Activated naive CD4-positive, alpha-beta T cell treated with anti-CD3 and anti-CD28 coated beads for 36 hours (primary cell): ENCODE measurements at regions of chr12 and their contacts with region 1.

Region 1: DNA sequence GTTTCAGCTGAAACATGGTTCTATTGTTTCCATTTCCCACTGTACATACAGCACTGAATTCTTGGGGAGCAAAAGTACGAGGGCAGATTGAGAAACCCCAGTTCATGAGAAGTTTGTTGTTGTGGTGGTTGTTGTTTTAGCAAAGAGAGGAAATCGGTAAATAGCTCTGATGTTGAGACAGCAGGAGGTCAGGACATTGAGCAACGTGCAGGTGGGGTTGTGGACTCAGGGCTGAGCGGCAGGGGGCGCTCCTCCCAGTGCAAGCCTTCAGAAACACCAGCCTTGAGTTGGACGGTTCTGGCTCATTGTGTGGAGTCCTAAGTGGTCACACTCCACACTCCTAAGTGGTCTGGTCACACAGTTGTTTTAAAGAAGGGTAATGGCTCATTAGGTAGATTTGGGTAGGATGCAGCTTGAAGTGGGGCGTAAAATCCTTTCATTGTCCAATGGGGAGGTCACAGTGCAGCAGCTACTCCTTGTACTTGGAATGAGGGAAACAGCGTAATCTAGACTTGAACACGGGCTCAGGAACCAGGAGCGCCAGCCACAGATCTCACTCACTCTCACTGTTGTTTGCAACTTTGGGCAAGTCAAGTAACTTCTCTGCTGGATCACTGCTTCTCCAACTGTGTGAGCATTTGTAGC is 14.5 kb upstream of the PWP1 start:
- DNase-seq: peak; percentile 60
- H3K4me3 Mint-ChIP-seq: no peak overlapping the region
- H3K27ac Mint-ChIP-seq: no peak overlapping the region
- H3K4me1 Mint-ChIP-seq: peaks cover 4% of the 10 kb centered on the region
- H3K27me3 Mint-ChIP-seq: peaks cover 6% of the 10 kb centered on the region

Region 2: DNA sequence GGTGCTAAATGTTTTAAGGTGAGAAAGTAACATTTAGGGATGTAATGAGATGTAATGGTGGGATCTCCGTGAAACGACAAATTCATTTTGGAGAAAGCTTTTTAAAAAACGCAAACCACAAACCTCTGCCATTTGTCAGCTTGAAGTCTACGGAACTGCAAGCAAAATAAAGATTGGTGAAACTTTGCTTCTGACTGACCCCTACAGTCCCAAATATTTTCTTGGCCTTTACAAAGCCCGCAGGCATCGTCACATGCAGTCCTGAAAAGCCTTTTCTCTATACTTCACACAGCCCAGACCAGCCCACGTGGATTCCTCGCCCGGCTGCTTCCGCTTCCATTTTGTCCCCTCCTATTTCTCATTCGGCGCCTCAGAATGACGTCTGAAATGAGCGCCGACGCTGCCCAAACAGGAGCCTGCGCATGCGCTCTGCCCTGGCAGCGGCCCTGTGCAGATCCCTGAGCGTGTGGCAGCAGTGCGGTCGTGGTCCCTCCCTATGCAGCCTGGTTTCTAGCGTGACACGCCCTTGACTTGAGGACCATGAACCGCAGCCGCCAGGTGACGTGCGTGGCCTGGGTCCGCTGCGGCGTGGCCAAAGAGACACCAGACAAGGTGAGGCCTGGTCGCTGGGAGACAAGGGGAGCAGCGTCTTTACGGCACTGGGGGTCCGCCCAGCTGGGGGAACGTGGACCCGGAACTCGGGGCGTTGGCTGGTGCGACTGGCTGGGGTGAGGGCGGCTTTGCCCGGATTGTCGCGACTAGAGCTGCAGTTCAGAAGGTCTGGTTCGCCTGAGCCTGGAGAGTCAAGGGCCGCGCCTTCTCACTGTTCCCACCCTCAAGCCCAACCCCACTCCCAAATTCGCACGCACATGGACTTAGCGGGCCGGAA is 14.5 kb after region 1 on chr12 and contains the start of gene PWP1:
- CTCF ChIA-PET with region 1: interaction called, 39 read pairs
- intact Hi-C with region 1: no loop called
- DNase-seq: peak; percentile 95
- H3K4me3 Mint-ChIP-seq: peak within 1 kb of the TSS; percentile 90
- H3K27ac Mint-ChIP-seq: peak within 1 kb of the TSS; percentile 95
- H3K4me1 Mint-ChIP-seq: peaks cover 20% of the 10 kb centered on the region
- H3K27me3 Mint-ChIP-seq: no peaks in the 10 kb centered on the region
- total RNA-seq, gene PWP1: 35.0 to 37.1 TPM

Region 3: DNA sequence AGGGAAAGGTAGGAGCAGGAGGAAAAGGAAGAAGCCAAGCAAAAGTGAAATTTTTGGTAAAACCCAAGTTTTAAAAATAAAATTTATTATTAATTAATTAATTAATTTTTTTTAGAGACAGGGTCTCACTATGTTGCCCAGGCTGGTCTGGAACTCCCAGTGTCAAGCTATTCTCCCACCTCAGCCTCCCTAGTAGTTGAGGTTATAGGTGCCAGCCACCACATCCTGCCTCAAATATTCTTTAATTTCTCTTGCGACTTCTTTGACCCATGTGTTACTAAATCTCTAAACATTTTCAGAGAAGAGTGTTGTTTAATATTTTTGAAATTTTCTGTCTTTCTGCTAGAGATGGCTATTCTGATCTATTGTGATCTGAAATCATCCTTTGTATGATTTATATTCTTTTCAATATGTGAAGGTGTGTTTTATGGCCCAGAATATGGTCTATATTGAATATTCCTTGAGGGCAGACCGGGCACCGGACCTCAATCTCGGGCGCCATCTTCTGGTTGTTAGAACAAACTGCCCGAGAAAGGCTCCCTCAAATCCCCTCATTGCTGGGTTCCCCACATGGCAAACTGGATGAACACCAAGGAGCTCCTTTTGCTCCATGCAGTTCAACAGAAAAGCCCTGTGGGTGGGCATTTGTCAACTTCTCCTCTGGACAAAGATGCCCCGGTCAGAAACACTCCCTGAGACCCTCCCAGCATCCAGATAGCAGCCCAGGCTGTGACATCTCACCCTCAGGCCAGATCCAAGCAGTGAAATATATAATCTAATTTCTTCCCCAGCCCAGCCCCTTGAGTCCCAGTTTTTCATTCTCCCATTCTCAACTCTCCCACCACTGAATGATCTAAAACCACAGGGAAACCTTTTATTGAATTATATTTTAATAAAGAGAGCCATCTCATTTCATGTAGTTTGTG is 213.9 kb after region 1 on chr12:
- CTCF ChIA-PET with region 1: interaction called, 58 read pairs
- intact Hi-C with region 1: loop called (anchors 1 kb)
- DNase-seq: peak; percentile 64
- H3K4me3 Mint-ChIP-seq: no peak overlapping the region
- H3K27ac Mint-ChIP-seq: no peak overlapping the region
- H3K4me1 Mint-ChIP-seq: no peaks in the 10 kb centered on the region
- H3K27me3 Mint-ChIP-seq: peaks cover 16% of the 10 kb centered on the region

Region 4: DNA sequence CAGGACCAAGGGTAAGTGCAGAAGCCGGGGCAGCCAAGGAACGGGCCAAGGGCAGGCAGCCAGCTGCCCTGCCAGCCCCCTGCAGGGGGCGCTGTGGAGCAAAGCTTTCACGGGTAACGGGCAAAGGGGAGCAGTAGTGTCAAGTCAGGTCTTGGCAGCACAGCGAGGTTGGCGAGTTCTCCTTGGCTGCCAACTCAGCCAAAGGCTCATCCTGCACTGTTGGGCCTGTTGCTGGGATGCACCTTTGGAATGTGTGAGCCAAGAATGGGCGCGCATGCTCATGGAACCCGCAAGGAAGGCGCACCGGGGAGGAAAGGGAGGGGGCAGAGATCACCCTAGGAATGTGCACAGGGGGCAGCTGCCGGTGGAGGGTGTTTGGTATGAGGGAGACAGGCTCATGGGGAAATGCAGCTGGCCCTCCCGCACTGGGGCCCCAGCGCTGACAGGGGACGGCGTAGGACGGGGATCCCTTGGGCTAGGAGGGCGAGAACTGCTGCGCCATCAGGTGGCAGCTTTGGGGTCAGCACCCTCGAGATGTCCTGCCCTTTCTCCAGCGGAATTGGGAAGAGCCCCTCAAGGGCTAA is 241.4 kb after region 1 on chr12:
- CTCF ChIA-PET with region 1: interaction called, 5 read pairs
- intact Hi-C with region 1: loop called (anchors 1 kb)
- DNase-seq: peak; percentile 75
- H3K4me3 Mint-ChIP-seq: peak overlapping the region; percentile 70
- H3K27ac Mint-ChIP-seq: no peak overlapping the region
- H3K4me1 Mint-ChIP-seq: peaks cover 2% of the 10 kb centered on the region
- H3K27me3 Mint-ChIP-seq: peaks cover 27% of the 10 kb centered on the region

Region 5: DNA sequence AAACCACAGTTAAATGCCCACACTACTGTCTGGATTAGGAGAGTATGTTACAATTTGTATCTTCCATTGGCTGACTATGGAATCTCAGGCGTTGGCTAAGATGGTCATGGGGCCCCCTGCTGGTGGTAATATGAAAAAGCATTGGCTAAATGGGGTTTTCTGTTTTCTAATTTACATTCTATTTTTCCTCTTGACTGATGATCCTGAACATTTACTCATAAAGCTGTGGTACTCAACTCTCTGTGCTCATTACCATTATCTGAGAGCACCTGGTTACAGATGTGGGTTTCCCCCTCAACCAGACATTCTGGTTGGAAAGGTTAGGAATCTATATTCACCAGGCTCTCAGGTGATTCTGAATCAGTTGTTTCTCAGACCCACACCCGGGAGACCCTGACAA is 522.8 kb after region 1 on chr12:
- CTCF ChIA-PET with region 1: no interaction called
- intact Hi-C with region 1: loop called (anchors 10 kb)
- DNase-seq: peak; percentile 42
- H3K4me3 Mint-ChIP-seq: no peak overlapping the region
- H3K27ac Mint-ChIP-seq: no peak overlapping the region
- H3K4me1 Mint-ChIP-seq: no peaks in the 10 kb centered on the region
- H3K27me3 Mint-ChIP-seq: peaks cover 12% of the 10 kb centered on the region